ENCODE measurements at regions of chr6 and their contacts with region 1.

Region 1: GRCh38 chr6:110682460-110682853 is 132.8 kb downstream of the CDK19 start:
- DNase-seq: peak; percentile 78
- ATAC-seq: peak; percentile 88
- H3K4me3 ChIP-seq: peak overlapping the region; percentile 28; the same call in 1 of the 2 replicates
- H3K27ac ChIP-seq: peak overlapping the region; percentile 80
- H3K4me1 ChIP-seq: peaks cover 17% of the 10 kb centered on the region
- H3K27me3 ChIP-seq: no peaks in the 10 kb centered on the region
- CTCF ChIP-seq: peak; percentile 84

Region 2: GRCh38 chr6:110484310-110484709 is 198.1 kb before region 1 on chr6:
- CTCF ChIA-PET with region 1: interaction called, 5 read pairs
- POLR2A ChIA-PET with region 1: no interaction called
- intact Hi-C with region 1: loop called (anchors 5 kb)
- DNase-seq: peak; percentile 84
- ATAC-seq: peak; percentile 84
- H3K4me3 ChIP-seq: no peak overlapping the region
- H3K27ac ChIP-seq: peak overlapping the region; percentile 71
- H3K4me1 ChIP-seq: peaks cover 17% of the 10 kb centered on the region
- H3K27me3 ChIP-seq: no peaks in the 10 kb centered on the region
- CTCF ChIP-seq: no peak

Region 3: DNA sequence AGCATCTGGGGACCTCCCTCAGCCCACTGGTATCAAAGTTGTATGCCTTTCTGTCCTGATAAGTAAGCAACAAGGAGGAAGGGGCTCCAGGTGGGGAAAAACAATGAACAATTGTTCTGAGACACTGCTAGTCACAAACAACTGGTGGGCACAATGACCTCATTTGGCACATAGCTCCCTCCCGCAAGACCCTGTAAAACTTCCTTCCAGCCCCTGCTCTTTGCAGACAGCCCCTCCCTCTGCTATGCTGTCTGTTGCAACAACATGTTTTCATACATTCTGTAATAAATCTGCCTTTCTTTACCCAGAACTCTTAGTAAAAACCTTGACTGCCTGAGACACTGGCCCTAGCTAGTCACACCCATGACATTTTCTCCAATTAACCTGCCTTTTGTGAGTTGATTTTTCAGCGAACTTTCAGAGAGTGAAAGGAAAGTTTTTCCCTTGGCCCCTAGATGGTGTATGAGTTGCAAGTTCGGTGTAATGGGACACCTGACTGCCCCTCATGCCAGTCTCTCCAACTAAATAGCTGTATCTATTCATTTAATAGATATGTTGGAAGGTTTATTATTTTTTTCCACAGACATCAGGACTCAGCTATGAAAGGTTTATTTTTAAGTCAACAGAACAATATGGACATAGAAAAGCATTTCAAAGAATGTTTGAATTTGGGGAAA is 63.7 kb before region 1 on chr6:
- CTCF ChIA-PET with region 1: interaction called, 6 read pairs
- POLR2A ChIA-PET with region 1: no interaction called
- intact Hi-C with region 1: loop called (anchors 5 kb)
- DNase-seq: peak; percentile 57
- ATAC-seq: peak; percentile 89
- H3K4me3 ChIP-seq: no peak overlapping the region
- H3K27ac ChIP-seq: peak overlapping the region; percentile 58
- H3K4me1 ChIP-seq: peaks cover 22% of the 10 kb centered on the region
- H3K27me3 ChIP-seq: no peaks in the 10 kb centered on the region
- CTCF ChIP-seq: peak; percentile 67

Region 4: DNA sequence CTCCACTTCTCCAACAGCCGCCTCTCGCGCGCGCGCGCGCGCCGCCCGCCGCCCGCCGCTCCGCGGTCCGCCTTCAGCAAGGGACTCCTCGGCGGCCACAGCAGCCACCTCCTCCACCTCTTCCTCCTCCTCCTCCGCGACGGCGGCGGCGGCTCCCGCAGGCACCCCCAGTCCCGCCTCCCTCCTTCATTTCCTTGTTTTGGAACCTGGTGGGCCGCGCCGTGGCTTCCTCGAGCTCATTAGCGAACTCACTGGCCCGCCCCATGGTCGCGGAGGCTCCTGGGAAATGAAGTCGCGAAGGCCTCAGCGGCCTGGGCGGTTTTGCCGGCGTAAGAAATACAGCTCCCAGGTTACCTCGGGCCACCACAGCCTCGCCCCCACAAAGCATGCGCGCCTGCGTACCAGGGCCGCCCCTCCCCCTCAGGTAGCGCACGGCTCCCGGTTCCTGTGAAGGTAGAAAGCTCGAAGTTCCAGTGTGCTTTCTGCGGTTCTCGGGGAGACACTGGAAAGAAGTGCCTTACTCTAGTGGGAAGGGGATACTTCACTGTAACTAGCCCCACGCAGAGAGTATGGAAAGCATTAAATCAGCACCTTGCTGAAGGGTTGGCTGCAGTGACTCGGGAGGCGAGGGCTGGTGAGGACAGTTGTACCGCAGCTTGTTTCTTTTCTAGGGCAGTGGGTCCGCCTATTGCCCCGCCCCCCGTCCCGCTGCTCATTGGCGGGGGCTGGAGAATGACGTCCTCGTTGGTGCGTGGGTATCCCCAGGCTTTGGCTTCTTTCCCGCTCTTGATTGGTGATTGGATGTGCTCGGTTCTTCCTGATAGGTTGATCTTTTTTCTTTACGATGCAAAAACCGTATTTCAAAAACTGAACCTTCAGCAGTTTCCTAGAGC is 133.0 kb after region 1 on chr6 and contains the start of gene CDK19:
- CTCF ChIA-PET with region 1: no interaction called
- POLR2A ChIA-PET with region 1: interaction called, 4 read pairs
- intact Hi-C with region 1: loop called (anchors 5 kb)
- DNase-seq: peak; percentile 96
- ATAC-seq: peak; percentile 87
- H3K4me3 ChIP-seq: peak within 1 kb of the TSS; percentile 94
- H3K27ac ChIP-seq: peak within 1 kb of the TSS; percentile 86
- H3K4me1 ChIP-seq: peaks cover 29% of the 10 kb centered on the region
- H3K27me3 ChIP-seq: no peaks in the 10 kb centered on the region
- CTCF ChIP-seq: no peak
- total RNA-seq, gene CDK19: 4.2 and 5.4 TPM in 2 replicates

Region 5: GRCh38 chr6:110873981-110874879 is 191.8 kb after region 1 on chr6 and contains the start of gene AMD1:
- CTCF ChIA-PET with region 1: interaction called, 4 read pairs
- POLR2A ChIA-PET with region 1: interaction called, 26 read pairs
- intact Hi-C with region 1: loop called (anchors 1 kb)
- DNase-seq: peak; percentile 92
- ATAC-seq: peak; percentile 81
- H3K4me3 ChIP-seq: peak within 1 kb of the TSS; percentile 96
- H3K27ac ChIP-seq: peak within 1 kb of the TSS; percentile 60
- H3K4me1 ChIP-seq: peaks cover 7% of the 10 kb centered on the region
- H3K27me3 ChIP-seq: no peaks in the 10 kb centered on the region
- CTCF ChIP-seq: no peak
- total RNA-seq, gene AMD1: 56.2 and 72.5 TPM in 2 replicates

Region 6: GRCh38 chr6:110949679-110950285 is 267.3 kb after region 1 on chr6:
- CTCF ChIA-PET with region 1: no interaction called
- POLR2A ChIA-PET with region 1: no interaction called
- intact Hi-C with region 1: loop called (anchors 5 kb)
- DNase-seq: peak; percentile 50
- ATAC-seq: no peak
- H3K4me3 ChIP-seq: no peak overlapping the region
- H3K27ac ChIP-seq: no peak overlapping the region
- H3K4me1 ChIP-seq: peaks cover 28% of the 10 kb centered on the region
- H3K27me3 ChIP-seq: no peaks in the 10 kb centered on the region
- CTCF ChIP-seq: peak; percentile 57

Region 7: DNA sequence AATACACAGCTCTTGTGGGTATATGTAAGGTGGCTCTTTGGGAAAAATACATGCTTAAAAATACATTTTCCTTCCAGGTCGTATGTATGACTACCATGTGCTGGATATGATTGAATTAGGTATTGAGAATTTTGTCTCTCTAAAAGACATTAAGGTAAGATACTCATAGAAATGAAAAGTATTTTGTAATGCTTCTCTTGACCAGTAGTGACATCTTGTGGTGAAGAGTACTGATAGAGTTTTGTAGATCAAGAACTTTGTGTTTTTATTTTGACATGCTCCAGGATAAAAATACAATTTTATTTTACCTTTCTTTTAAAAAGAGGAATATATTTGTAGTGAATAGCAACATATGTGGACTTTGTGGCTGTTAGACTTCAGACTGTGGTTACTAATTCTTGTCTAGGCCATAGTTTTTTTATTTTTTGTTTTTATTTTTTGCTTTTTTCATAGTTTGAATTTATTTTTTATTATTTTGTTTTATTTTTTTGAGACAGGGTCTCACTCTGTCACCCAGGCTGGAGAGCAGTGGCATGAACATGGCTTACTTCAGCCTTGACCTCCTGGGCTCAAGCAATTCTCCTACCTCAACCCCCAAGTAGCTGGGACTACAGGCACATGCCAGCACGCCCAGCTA is 317.3 kb after region 1 on chr6:
- CTCF ChIA-PET with region 1: no interaction called
- POLR2A ChIA-PET with region 1: no interaction called
- intact Hi-C with region 1: loop called (anchors 5 kb)
- DNase-seq: peak; percentile 61
- ATAC-seq: peak; percentile 50; the same call in 1 of the 2 replicates
- H3K4me3 ChIP-seq: no peak overlapping the region
- H3K27ac ChIP-seq: no peak overlapping the region
- H3K4me1 ChIP-seq: no peaks in the 10 kb centered on the region
- H3K27me3 ChIP-seq: no peaks in the 10 kb centered on the region
- CTCF ChIP-seq: peak; percentile 63

Measured in PC-3 (cell line).